HEK293T (cell line): ENCODE measurements at regions of chr17 and their contacts with region 1.

Region 1: DNA sequence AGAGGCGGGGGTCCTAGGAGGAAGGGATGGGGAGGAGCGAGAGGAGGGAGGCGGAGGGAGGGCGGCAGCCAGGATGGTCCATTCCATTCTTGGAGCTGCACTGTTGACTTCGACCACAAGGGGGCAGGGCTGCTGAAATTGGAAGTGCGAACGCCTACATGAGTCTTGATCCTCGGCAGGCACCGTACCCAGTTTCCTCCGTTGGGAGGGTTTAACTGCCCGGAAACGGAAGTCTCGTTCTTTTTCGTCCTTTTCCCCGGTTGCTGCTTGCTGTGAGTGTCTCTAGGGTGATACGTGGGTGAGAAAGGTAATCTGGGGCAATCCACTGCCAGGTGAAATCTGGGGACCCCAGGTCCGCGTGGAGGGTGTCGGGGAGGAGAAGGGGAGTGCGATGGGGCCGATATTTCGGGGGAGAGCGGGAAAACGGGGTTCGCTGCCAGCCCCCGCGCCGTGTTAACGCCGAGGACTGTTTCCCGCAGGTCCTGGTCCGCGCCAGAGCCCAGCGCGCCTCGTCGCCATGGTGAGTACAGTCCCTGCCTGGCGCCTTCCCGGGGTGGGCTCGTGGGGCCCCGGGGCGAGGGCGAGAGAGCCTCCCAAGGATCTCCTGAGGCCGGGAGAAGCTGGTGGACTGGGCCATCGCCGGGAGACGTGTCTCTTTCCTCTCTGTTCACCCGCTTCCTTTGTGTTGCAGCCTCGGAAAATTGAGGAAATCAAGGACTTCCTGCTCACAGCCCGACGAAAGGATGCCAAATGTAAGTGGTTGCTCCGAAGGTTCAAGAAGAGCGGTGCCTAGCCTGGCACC is at the start of gene RPL38:
- DNase-seq: peak; percentile 91

Region 2: GRCh38 chr17:73984941-73985340 is 218.7 kb before region 1 on chr17:
- CTCF ChIA-PET with region 1: no interaction called
- POLR2A ChIA-PET with region 1: no interaction called
- DNase-seq: no peak

Region 3: DNA sequence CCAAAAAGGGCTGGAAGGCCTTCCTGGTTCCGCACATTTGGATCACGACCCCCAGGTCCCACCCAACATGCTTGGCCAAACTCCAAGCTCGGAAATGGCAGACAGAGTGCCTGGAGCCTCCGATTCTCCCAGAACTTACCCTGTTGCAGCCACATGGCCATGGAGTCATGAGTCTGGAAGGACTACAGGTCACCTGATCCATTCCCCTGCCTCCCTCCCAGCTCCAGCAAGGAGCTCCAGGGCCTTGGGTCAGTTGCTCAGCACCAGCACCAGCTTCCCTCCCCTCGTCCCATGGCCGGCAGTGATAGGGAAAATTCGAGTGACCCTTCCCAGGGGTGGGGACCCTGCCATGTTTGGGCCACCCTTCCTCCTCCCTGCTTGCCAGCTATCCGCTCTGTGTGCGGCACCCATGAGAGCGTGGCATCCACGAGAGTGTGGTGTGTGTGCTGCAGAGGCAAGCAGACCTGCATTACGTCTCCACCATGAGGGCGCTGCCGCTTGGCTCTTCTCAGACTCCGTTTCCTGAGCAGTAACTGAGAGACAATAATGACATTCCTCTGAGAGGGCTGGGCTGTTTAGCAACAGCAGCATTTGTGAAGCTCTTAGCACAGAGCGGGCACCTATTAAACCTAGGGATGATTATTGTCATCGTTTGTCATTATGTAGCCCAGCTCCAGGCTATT is 21.5 kb before region 1 on chr17:
- CTCF ChIA-PET with region 1: interaction called, 17 read pairs
- POLR2A ChIA-PET with region 1: no interaction called
- DNase-seq: no peak

Region 4: GRCh38 chr17:74190172-74190571 is 13.5 kb before region 1 on chr17:
- CTCF ChIA-PET with region 1: interaction called, 29 read pairs
- POLR2A ChIA-PET with region 1: interaction called, 7 read pairs
- DNase-seq: peak; percentile 70